ENCODE measurements at regions of chr14 and their contacts with region 1.

Region 1: GRCh38 chr14:21768116-21768874 is 94.7 kb upstream of the OR4E1 start:
- DNase-seq: no peak
- ATAC-seq: peak; percentile 98
- H3K4me3 Mint-ChIP-seq: no peak overlapping the region
- H3K27ac Mint-ChIP-seq: no peak overlapping the region; the same call in 1 of the 2 replicates
- H3K4me1 Mint-ChIP-seq: peaks cover 14% of the 10 kb centered on the region
- H3K27me3 Mint-ChIP-seq: peaks cover 14% of the 10 kb centered on the region
- CTCF ChIP-seq: no peak

Region 2: DNA sequence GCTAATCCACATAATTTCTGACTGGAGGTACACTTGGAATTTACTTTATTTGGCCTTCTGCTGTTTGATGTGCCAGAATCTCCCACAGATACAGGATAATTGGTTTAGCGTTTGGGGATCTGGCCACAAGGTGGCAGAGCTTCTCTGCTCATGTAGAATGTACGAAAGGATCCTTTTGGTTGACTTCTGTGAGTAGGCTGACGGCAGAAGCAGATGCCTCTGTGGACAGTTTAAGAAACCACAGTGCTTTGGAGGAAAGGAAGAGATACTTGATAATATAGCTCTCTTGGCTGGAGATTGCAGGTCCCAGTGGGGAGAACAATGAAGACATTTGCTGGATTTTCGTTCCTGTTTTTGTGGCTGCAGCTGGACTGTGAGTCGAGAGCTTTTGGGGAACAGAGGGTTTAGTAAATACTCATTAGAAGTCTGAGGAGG is 19.4 kb before region 1 on chr14:
- CTCF ChIA-PET with region 1: interaction called, 25 read pairs
- POLR2A ChIA-PET with region 1: no interaction called
- DNase-seq: peak; percentile 69
- ATAC-seq: peak; percentile 94
- H3K4me3 Mint-ChIP-seq: no peak overlapping the region
- H3K27ac Mint-ChIP-seq: no peak overlapping the region
- H3K4me1 Mint-ChIP-seq: no peaks in the 10 kb centered on the region
- H3K27me3 Mint-ChIP-seq: no peaks in the 10 kb centered on the region; the same call in 1 of the 2 replicates
- CTCF ChIP-seq: 0 out of 2 replicates have a peak, but pooled peaks have one; percentile 48

Region 3: DNA sequence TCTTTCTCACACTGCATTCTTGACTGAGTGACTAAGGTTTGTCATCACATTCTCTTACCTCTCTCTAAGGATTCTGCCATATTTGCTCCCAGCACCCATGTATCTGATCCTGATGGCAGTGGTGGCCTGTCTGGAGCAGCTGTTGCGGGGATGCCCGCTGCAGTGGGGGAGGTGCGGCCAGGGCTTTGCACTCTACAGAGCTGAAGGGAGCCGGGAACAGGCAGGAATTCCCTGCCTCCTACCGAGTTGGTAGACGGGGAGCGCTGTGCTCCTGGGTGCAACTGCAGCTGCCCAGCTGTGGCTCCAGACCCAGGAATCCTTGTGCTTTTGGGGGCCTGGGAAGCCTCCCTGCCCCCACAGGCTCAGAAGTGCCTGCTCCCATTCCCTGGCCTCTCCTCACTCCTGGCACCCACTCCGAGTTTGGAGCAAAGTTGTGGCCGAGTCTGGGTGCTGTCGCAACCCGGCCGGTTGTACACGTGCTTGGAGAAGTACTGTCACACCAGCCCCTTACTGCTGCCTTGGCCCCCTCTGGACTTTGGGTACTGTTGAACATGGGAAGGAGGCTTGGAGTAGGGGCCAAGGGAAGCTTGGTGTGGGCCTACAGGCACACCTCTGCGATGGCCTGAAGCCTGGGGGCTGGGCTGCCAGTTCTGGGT is 12.3 kb after region 1 on chr14:
- CTCF ChIA-PET with region 1: interaction called, 29 read pairs
- POLR2A ChIA-PET with region 1: no interaction called
- DNase-seq: no peak
- ATAC-seq: no peak; the same call in 1 of the 2 replicates
- H3K4me3 Mint-ChIP-seq: no peak overlapping the region
- H3K27ac Mint-ChIP-seq: no peak overlapping the region
- H3K4me1 Mint-ChIP-seq: peaks cover 27% of the 10 kb centered on the region
- H3K27me3 Mint-ChIP-seq: 0 out of 2 replicates have a peak, but pooled peaks cover 9% of the 10 kb centered on the region
- CTCF ChIP-seq: no peak

Region 4: GRCh38 chr14:21791749-21792148 is 23.5 kb after region 1 on chr14:
- CTCF ChIA-PET with region 1: interaction called, 15 read pairs
- POLR2A ChIA-PET with region 1: no interaction called
- DNase-seq: no peak
- ATAC-seq: no peak
- H3K4me3 Mint-ChIP-seq: no peak overlapping the region
- H3K27ac Mint-ChIP-seq: no peak overlapping the region
- H3K4me1 Mint-ChIP-seq: peaks cover 6% of the 10 kb centered on the region
- H3K27me3 Mint-ChIP-seq: peaks cover 95% of the 10 kb centered on the region
- CTCF ChIP-seq: no peak

Region 5: DNA sequence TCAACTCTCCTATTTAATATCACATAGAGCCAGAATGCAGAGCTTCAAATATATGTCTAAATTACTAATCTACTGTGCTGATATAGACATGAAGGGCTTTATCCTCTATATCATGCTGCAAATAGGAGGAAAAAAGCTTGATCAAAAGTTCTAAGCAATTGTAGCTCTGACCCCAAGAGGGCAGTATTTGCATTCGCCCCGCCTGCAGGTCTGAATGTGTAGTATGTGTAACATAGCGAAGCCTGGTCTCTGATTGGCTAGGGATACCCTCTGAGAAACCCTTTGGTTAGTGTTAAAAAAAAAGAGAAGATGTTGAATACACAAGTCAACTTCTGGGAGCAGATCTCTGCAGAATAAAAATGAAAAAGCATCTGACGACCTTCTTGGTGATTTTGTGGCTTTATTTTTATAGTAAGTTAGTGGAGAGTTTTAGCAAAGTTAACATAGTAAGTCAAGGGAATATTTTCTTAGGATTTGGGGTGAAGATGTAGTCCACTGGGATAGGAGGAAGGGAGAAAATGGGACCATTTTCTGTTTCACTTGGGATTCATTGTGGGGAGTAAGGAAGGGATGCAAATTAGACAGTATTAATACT is 57.0 kb after region 1 on chr14:
- CTCF ChIA-PET with region 1: interaction called, 23 read pairs
- POLR2A ChIA-PET with region 1: no interaction called
- DNase-seq: peak; percentile 63
- ATAC-seq: peak; percentile 99
- H3K4me3 Mint-ChIP-seq: no peak overlapping the region
- H3K27ac Mint-ChIP-seq: no peak overlapping the region
- H3K4me1 Mint-ChIP-seq: peaks cover 7% of the 10 kb centered on the region
- H3K27me3 Mint-ChIP-seq: peaks cover 11% of the 10 kb centered on the region; the same call in 1 of the 2 replicates
- CTCF ChIP-seq: peak; percentile 55; the same call in 1 of the 2 replicates

Region 6: GRCh38 chr14:21852061-21852664 is 83.9 kb after region 1 on chr14:
- CTCF ChIA-PET with region 1: interaction called, 22 read pairs
- POLR2A ChIA-PET with region 1: no interaction called
- DNase-seq: peak; percentile 77
- ATAC-seq: peak; percentile 83
- H3K4me3 Mint-ChIP-seq: no peak overlapping the region
- H3K27ac Mint-ChIP-seq: no peak overlapping the region
- H3K4me1 Mint-ChIP-seq: no peaks in the 10 kb centered on the region
- H3K27me3 Mint-ChIP-seq: peaks cover 20% of the 10 kb centered on the region
- CTCF ChIP-seq: peak; percentile 30

Region 7: GRCh38 chr14:21933681-21934080 is 165.4 kb after region 1 on chr14:
- CTCF ChIA-PET with region 1: no interaction called
- POLR2A ChIA-PET with region 1: no interaction called
- DNase-seq: no peak
- ATAC-seq: 0 out of 2 replicates have a peak, but pooled peaks have one; percentile 16
- H3K4me3 Mint-ChIP-seq: no peak overlapping the region
- H3K27ac Mint-ChIP-seq: no peak overlapping the region
- H3K4me1 Mint-ChIP-seq: peaks cover 14% of the 10 kb centered on the region
- H3K27me3 Mint-ChIP-seq: no peaks in the 10 kb centered on the region; the same call in 1 of the 2 replicates
- CTCF ChIP-seq: no peak

Region 8: DNA sequence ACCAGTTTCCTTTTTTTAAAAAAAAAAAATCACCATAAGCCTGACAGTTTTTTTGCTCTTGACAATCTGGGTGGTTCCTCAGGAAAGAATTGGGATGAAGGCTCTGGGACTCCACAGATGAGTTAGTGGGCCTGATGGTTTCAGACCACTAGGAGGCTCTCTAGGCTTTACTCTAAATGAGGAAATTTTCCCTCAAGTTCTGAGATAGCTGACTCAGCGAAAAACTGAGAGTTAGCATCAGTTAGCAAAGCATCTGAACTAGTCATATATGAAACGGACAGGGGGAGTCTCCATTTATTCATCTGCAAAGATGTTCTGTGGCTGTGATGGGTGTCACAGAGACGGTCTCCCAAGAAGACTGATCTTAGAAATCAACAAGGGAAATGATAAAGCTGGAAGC is 219.6 kb after region 1 on chr14:
- CTCF ChIA-PET with region 1: no interaction called
- POLR2A ChIA-PET with region 1: no interaction called
- DNase-seq: peak; percentile 27
- ATAC-seq: peak; percentile 77
- H3K4me3 Mint-ChIP-seq: no peak overlapping the region
- H3K27ac Mint-ChIP-seq: no peak overlapping the region
- H3K4me1 Mint-ChIP-seq: no peaks in the 10 kb centered on the region
- H3K27me3 Mint-ChIP-seq: peaks cover 4% of the 10 kb centered on the region; the same call in 1 of the 2 replicates
- CTCF ChIP-seq: peak; percentile 35; the same call in 1 of the 2 replicates

Region 9: DNA sequence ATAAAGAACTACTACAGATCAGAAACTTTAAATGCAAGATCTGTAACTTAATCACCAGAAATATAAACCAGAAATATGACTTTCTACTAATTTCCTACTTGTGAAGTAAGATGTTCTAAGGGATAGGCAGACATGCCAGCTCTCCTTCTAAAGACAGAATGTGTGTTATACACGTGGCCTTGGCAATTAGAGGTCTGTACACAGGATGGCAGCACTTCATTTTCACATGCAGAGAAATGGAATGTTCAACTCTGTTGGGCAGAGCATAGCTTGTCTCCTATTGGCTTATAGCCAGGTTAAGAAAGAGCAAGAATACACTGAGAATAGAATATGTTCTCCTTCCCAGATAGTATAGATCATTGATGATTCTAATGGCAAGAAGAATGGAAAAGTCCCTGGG is 416.9 kb after region 1 on chr14:
- CTCF ChIA-PET with region 1: no interaction called
- POLR2A ChIA-PET with region 1: no interaction called
- DNase-seq: no peak
- ATAC-seq: peak; percentile 39; the same call in 1 of the 2 replicates
- H3K4me3 Mint-ChIP-seq: no peak overlapping the region
- H3K27ac Mint-ChIP-seq: no peak overlapping the region
- H3K4me1 Mint-ChIP-seq: no peaks in the 10 kb centered on the region
- H3K27me3 Mint-ChIP-seq: no peaks in the 10 kb centered on the region
- CTCF ChIP-seq: no peak